PC-9 (cell line): ENCODE measurements at regions of chr19 and their contacts with region 1.

Region 1: GRCh38 chr19:45469132-45469944 is 1.5 kb downstream of the FOSB start:
- DNase-seq: peak; percentile 85 to 95
- H3K4me3 ChIP-seq: peak overlapping the region; percentile 82
- H3K27ac ChIP-seq: peak overlapping the region; percentile 72
- H3K4me1 ChIP-seq: peaks cover 19% of the 10 kb centered on the region
- H3K27me3 ChIP-seq: no peaks in the 10 kb centered on the region
- CTCF ChIP-seq: peak; percentile 29; the same call in 1 of the 2 replicates

Region 2: GRCh38 chr19:45439569-45440254 is 29.6 kb before region 1 on chr19:
- CTCF ChIA-PET with region 1: interaction called, 11 read pairs
- POLR2A ChIA-PET with region 1: interaction called, 13 read pairs
- intact Hi-C with region 1: loop called (anchors 2 kb)
- DNase-seq: peak in 1 of 2 experiments; percentile 86
- H3K4me3 ChIP-seq: peak overlapping the region; percentile 83
- H3K27ac ChIP-seq: no peak overlapping the region
- H3K4me1 ChIP-seq: peaks cover 17% of the 10 kb centered on the region
- H3K27me3 ChIP-seq: no peaks in the 10 kb centered on the region
- CTCF ChIP-seq: peak; percentile 100

Region 3: GRCh38 chr19:45450012-45450333 is 19.4 kb before region 1 on chr19:
- CTCF ChIA-PET with region 1: interaction called, 4 read pairs
- POLR2A ChIA-PET with region 1: interaction called, 18 read pairs
- intact Hi-C with region 1: loop called (anchors 1 kb)
- DNase-seq: no peak
- H3K4me3 ChIP-seq: peak overlapping the region; percentile 65
- H3K27ac ChIP-seq: peak overlapping the region; percentile 71
- H3K4me1 ChIP-seq: peaks cover 49% of the 10 kb centered on the region
- H3K27me3 ChIP-seq: no peaks in the 10 kb centered on the region
- CTCF ChIP-seq: no peak

Region 4: DNA sequence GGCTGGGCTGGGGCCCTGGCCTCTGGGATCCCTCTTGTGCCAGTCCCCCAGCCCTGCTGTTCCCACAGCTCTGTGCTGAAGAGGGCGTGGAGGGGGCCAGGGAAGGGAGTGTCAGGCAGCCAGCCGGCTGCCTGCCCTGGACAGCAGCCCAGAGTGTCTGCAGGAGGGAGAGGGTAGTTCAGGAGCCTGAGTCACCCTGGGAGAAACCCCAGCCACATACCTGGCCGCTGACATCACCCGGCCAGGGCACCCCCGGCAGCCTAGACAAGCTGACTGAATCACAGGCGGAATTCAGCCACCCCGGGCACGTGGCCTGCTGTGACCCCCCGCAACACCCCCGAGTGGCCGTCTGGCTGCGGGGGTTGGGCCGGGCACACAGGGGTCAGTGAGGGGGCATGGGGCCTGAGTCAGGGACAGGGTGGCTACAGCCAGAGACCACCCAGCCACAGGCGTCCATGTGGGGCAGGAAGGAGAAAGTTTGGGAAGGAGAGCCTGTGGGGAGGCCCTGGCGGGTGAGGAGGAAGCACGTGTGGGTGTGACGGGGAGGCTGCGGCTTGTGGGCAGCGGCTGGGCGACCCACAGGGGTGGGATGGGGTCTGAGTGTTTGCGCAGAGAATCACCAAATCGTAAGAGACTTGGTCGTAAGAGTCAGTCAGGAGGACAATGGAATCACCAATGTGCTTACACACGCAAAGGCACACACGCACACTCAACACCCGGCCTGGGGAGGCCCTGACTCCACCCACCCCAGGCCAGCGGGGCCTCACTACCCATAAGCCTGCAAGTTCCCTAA is 13.4 kb before region 1 on chr19:
- CTCF ChIA-PET with region 1: interaction called, 9 read pairs
- POLR2A ChIA-PET with region 1: interaction called, 64 read pairs
- intact Hi-C with region 1: loop called (anchors 1 kb)
- DNase-seq: peak; percentile 98
- H3K4me3 ChIP-seq: peak overlapping the region; percentile 53; the same call in 1 of the 2 replicates
- H3K27ac ChIP-seq: peak overlapping the region; percentile 93
- H3K4me1 ChIP-seq: peaks cover 38% of the 10 kb centered on the region
- H3K27me3 ChIP-seq: no peaks in the 10 kb centered on the region
- CTCF ChIP-seq: no peak

Region 5: GRCh38 chr19:45502111-45502510 is 32.8 kb after region 1 on chr19:
- CTCF ChIA-PET with region 1: no interaction called
- POLR2A ChIA-PET with region 1: no interaction called
- intact Hi-C with region 1: no loop called
- DNase-seq: no peak
- H3K4me3 ChIP-seq: no peak overlapping the region
- H3K27ac ChIP-seq: no peak overlapping the region
- H3K4me1 ChIP-seq: peaks cover 21% of the 10 kb centered on the region
- H3K27me3 ChIP-seq: no peaks in the 10 kb centered on the region
- CTCF ChIP-seq: no peak

Region 6: GRCh38 chr19:45692187-45693105 is 223.1 kb after region 1 on chr19 and contains the start of gene QPCTL:
- CTCF ChIA-PET with region 1: no interaction called
- POLR2A ChIA-PET with region 1: interaction called, 10 read pairs
- intact Hi-C with region 1: no loop called
- DNase-seq: peak; percentile 97 to 100
- H3K4me3 ChIP-seq: peak within 1 kb of the TSS; percentile 80
- H3K27ac ChIP-seq: peak within 1 kb of the TSS; percentile 72
- H3K4me1 ChIP-seq: peaks cover 11% of the 10 kb centered on the region
- H3K27me3 ChIP-seq: no peaks in the 10 kb centered on the region
- CTCF ChIP-seq: no peak
- total RNA-seq, gene QPCTL: 27.6 and 42.8 TPM in 2 replicates